ENCODE measurements at regions of chr20 and their contacts with region 1.

Region 1: GRCh38 chr20:3753098-3753980 is 14.2 kb downstream of the ADISSP start:
- DNase-seq: peak; percentile 71
- H3K4me3 Mint-ChIP-seq: no peak overlapping the region
- H3K27ac Mint-ChIP-seq: peak overlapping the region; percentile 16
- H3K4me1 Mint-ChIP-seq: peaks cover 15% of the 10 kb centered on the region
- H3K27me3 Mint-ChIP-seq: no peaks in the 10 kb centered on the region

Region 2: GRCh38 chr20:3716195-3716834 is 37.0 kb before region 1 on chr20:
- CTCF ChIA-PET with region 1: interaction called, 10 read pairs
- POLR2A ChIA-PET with region 1: no interaction called
- DNase-seq: peak; percentile 36
- H3K4me3 Mint-ChIP-seq: no peak overlapping the region
- H3K27ac Mint-ChIP-seq: no peak overlapping the region
- H3K4me1 Mint-ChIP-seq: peaks cover 29% of the 10 kb centered on the region
- H3K27me3 Mint-ChIP-seq: peaks cover 19% of the 10 kb centered on the region

Region 3: DNA sequence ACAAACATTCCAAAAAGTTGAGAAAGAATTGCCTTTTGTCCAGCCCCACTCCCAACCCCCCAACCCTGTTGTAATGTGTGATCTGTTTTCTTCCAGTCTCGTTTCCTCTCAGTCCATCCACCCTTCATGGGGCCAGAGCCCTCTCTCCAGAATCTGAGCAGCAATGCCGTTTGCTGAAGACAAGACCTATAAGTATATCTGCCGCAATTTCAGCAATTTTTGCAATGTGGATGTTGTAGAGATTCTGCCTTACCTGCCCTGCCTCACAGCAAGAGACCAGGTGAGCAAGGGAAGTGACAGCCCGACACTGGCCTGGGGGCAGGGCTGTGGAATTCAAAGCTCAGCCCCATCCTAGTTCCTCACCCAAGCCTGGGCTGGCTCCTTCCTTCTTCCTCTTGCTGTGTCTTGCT is 101.1 kb after region 1 on chr20:
- CTCF ChIA-PET with region 1: interaction called, 15 read pairs
- POLR2A ChIA-PET with region 1: interaction called, 3 read pairs
- DNase-seq: no peak
- H3K4me3 Mint-ChIP-seq: no peak overlapping the region
- H3K27ac Mint-ChIP-seq: no peak overlapping the region
- H3K4me1 Mint-ChIP-seq: peaks cover 6% of the 10 kb centered on the region
- H3K27me3 Mint-ChIP-seq: no peaks in the 10 kb centered on the region